ENCODE measurements at regions of chr1 and their contacts with region 1.

Region 1: DNA sequence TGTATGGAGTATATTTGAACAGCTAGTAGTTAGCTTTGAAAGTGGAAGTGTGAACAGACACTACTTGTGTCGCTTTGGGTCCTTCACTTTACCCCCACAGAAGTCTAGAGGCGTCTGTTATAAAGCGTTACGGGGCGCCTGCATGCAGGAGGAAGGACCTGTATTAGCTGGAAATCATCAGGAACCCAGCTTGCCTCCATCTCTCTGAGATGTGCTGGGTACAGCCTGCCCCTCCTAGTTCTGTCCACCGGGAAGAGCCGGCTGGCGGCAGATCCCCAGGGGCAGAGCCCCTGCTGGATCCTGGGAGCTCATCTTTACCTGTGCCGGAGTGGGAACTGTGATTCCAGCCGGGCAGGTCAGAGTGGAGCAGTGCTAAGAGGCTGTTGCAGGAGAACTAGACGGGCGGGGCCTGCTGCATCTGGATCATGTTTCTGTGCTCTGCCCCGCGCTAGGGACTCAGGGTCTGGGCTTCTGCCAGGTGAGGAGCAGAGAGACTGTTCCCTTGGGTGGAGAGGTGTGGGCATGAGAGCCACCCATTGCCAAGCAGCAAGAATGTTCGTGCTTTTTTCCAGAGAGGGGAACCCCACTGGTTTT is 22.3 kb upstream of the SPSB1 start:
- DNase-seq: no peak
- ATAC-seq: peak; percentile 21
- H3K4me3 Mint-ChIP-seq: no peak overlapping the region
- H3K27ac Mint-ChIP-seq: no peak overlapping the region
- H3K4me1 Mint-ChIP-seq: peaks cover 11% of the 10 kb centered on the region
- H3K27me3 Mint-ChIP-seq: no peaks in the 10 kb centered on the region; the same call in 1 of the 2 replicates
- CTCF ChIP-seq: no peak

Region 2: GRCh38 chr1:9110669-9111356 is 159.6 kb before region 1 on chr1:
- CTCF ChIA-PET with region 1: interaction called, 12 read pairs
- POLR2A ChIA-PET with region 1: no interaction called
- DNase-seq: peak; percentile 98
- ATAC-seq: peak; percentile 96
- H3K4me3 Mint-ChIP-seq: no peak overlapping the region
- H3K27ac Mint-ChIP-seq: no peak overlapping the region
- H3K4me1 Mint-ChIP-seq: no peaks in the 10 kb centered on the region
- H3K27me3 Mint-ChIP-seq: no peaks in the 10 kb centered on the region
- CTCF ChIP-seq: peak; percentile 94

Region 3: GRCh38 chr1:9201401-9202239 is 68.8 kb before region 1 on chr1:
- CTCF ChIA-PET with region 1: interaction called, 12 read pairs
- POLR2A ChIA-PET with region 1: no interaction called
- DNase-seq: no peak
- ATAC-seq: no peak
- H3K4me3 Mint-ChIP-seq: peak overlapping the region; percentile 57
- H3K27ac Mint-ChIP-seq: no peak overlapping the region
- H3K4me1 Mint-ChIP-seq: peaks cover 28% of the 10 kb centered on the region
- H3K27me3 Mint-ChIP-seq: peaks cover 81% of the 10 kb centered on the region
- CTCF ChIP-seq: no peak

Region 4: DNA sequence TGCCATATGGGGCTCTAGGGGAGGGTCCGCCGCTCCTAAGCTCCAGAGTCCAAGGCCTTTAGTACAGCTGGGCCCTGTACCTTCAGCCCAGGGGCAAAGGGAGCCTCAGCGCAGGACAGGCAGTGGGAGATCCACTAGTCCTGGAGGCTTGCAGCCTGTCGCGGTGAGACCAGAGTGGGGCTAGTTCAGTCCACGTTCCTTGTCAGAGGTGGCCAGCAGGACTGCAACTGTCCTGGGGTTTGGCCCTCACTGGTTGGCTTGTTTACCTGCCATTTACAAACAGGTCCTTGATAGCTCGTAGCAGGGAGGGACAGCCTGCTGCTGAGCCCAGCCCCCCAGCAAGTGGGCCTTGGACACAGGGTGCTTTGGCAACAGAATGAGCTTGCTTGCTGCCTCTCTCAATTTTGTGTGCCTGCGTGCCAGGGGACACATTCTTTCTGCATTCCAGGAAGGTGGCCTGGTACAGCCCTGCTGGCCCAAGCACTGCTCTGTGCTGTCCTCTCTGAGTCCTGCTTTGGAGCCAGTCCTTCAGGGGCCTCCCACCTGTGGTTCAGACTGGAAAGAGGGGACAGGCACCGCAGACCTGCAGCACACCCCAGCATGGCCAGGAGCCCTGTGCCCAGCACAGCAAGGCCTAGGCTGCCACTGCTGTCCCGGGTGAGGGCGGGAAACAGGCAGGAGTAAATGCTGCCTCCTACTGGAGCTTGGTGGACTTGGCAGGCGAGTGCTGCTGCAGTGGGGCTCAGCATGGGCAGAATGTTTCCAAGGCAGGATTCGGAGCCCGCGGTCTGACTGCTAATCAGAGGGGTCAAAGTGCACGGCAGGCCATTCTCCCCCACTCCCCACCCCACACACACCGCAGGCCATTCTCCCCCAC is 20.6 kb before region 1 on chr1:
- CTCF ChIA-PET with region 1: interaction called, 43 read pairs
- POLR2A ChIA-PET with region 1: no interaction called
- DNase-seq: peak; percentile 80
- ATAC-seq: peak; percentile 80
- H3K4me3 Mint-ChIP-seq: no peak overlapping the region
- H3K27ac Mint-ChIP-seq: no peak overlapping the region
- H3K4me1 Mint-ChIP-seq: peaks cover 42% of the 10 kb centered on the region
- H3K27me3 Mint-ChIP-seq: no peaks in the 10 kb centered on the region
- CTCF ChIP-seq: peak; percentile 72

Region 5: DNA sequence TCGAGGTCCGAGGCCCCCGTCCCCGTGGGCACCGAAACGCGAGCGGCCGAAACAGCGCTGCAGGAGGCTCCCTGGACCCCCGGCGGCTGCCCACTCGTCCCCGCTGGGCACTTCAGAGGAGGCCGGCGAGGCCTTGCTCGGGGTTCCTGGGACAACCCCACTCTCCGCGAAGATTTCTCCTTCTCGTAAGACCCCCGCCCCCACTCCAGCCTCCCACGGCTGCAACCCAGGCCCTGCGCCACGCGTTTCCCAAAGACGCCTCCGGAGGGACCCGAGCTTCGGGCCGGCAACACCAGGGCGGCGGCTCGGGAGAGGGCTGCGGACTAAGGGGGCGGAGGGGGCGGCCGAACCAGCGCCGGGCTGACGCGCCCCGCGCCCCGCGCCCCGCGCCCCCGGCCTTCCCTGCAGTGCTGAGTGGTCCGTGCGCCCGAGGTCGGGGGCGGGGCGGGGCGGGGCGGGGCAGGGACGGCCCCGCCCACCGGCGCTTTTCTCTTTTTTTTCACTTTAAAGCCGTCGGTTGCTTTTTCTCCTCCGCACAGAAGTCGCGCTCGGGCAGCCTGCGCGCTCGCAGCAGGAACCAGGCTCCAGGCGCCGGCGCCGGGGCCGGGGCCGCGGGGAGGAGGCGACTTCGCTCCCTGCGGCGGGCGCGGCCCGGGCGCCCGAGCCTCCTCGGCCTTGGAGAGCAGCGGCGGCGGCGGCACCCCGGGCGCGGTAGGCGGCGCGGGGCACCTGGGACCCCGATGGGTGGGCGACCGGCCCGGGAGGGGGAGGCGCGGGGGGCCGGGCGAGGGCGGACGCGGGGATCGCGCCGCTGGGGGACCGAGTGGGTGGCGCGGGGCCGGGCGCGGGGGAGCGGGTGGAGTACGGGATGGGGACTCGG is 22.2 kb after region 1 on chr1 and contains the start of gene SPSB1:
- CTCF ChIA-PET with region 1: interaction called, 27 read pairs
- POLR2A ChIA-PET with region 1: no interaction called
- DNase-seq: peak; percentile 60
- ATAC-seq: peak; percentile 71
- H3K4me3 Mint-ChIP-seq: peak within 1 kb of the TSS; percentile 70
- H3K27ac Mint-ChIP-seq: no peak within 1 kb of the TSS
- H3K4me1 Mint-ChIP-seq: peaks cover 12% of the 10 kb centered on the region
- H3K27me3 Mint-ChIP-seq: peaks cover 8% of the 10 kb centered on the region
- CTCF ChIP-seq: no peak
- total RNA-seq, gene SPSB1: 4.3 to 5.5 TPM (median 4.6 TPM) in 3 replicates

Region 6: DNA sequence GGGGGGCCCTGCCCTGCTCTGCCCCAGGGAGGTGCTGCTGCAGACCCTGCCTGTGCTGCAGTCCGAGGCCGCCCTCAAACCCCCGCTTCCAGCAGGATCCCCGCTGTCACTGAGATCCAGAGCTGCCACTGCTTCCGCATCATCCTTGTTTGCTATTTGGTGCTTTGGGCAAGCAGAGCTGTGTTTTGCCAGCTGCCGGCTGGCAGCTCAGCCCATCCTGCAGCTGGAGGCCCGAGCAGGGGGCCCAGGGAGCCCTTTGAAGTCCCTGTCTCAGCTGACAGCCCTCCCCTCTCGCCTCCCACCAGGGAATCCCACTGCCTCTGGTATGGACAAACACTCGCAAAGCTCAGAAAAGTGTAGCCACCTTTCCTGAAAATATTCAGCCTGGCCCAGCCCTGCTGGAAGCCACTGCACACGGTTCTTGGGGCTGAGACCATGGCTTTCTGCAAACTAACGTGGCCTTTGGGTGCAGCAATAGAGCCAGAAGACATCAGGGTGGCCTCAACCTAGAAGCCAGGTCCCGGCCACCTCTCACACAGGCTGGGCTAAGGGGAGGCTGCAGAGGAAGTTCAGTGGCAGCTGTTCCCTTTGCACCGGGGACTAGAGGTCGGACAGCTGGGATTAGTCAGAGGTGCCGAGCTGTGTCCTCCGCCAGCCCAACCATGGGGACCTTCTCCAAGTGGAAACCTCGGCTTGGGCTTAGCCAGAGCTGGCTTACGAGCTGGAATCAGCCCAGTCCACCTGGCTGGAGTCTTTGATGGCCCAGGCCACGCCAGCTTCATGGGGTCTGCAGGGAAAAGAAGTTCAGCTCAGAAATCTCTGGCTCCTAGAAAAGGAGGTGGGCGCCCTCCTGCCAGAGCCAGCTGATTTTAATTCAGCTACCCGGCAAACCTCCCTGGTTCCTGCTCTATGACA is 129.4 kb after region 1 on chr1:
- CTCF ChIA-PET with region 1: interaction called, 10 read pairs
- POLR2A ChIA-PET with region 1: no interaction called
- DNase-seq: no peak
- ATAC-seq: no peak
- H3K4me3 Mint-ChIP-seq: no peak overlapping the region
- H3K27ac Mint-ChIP-seq: no peak overlapping the region
- H3K4me1 Mint-ChIP-seq: no peaks in the 10 kb centered on the region
- H3K27me3 Mint-ChIP-seq: peaks cover 4% of the 10 kb centered on the region; the same call in 1 of the 2 replicates
- CTCF ChIP-seq: no peak

Region 7: DNA sequence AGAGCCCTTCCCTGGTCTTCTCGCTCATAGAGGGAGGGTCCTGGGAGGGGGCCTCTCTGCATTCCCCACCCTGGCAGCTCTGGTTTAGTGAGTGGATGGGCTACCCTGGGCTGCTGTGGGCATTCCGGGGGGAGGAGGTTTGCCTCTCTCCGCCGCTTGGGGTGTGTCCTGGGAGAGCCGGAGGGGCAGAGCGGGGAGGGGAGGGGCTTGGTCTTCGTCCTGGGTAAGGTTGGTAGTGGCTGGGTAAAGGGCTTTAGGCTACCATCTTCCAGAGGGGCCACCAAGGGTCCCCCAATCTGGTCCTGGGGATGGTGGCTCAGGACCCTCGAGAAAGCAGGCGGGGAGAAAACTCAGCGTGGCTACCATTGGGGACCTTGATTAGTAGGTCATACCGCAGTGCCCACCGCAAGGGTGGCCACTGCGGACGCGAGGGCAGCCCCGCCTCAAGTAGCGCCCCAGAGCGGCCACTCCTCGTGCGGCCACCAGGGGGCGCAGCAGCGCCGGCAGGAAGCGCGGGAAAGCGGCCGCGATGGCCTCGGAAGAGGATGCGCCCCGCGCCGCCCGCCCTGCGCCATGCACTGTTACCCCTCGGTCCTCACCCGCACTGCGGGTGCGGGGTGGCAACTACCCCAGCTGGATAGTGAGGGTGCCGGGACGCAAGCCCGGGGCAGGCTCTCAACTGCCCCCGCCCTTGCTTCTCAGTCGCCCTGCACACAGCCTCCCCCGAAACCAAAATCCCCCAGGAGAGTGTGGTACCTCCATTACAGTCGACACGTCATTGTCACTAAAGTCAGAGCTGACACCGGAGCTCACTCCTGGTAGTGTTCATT is 224.8 kb after region 1 on chr1:
- CTCF ChIA-PET with region 1: interaction called, 113 read pairs
- POLR2A ChIA-PET with region 1: no interaction called
- DNase-seq: peak; percentile 79
- ATAC-seq: peak; percentile 85
- H3K4me3 Mint-ChIP-seq: peak overlapping the region; percentile 57
- H3K27ac Mint-ChIP-seq: no peak overlapping the region
- H3K4me1 Mint-ChIP-seq: no peaks in the 10 kb centered on the region
- H3K27me3 Mint-ChIP-seq: peaks cover 37% of the 10 kb centered on the region
- CTCF ChIP-seq: peak; percentile 99

Measured in WTC11 (cell line).